ENCODE measurements at regions of chr1 and their contacts with region 1.

Region 1: DNA sequence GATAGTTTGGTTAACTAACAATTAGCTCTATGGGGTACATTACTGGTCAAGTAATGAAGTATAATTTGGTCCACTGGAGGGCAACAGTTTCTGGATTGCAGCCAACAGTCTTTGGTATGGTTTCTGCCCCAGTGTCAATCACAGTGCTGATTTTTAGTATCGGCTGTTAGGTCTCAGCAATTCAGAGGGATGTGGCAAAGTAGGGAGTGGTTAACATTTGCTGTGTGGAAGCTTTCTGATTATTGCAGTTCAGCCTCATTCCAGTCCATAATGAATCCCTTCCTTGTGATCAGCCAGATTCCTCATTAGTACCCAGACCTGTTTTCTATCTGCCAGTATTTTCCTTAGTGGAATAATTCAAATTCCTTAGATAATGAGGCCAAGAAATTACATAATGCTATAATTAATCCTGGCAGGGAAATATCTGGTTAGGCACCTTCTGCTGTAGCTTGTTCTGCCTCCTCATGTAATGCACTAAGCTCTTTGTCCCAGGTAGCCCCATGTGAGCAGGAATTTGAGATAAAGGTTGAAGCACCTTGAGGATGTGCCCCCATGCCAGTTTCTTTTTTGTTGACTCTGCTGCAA is 14.0 kb downstream of the F3 start:
- DNase-seq: no peak
- ATAC-seq: peak; percentile 35

Region 2: GRCh38 chr1:94095112-94095637 is 432.4 kb before region 1 on chr1:
- intact Hi-C with region 1: no loop called
- DNase-seq: peak; percentile 93
- ATAC-seq: peak; percentile 86

Region 3: GRCh38 chr1:94169126-94169525 is 358.4 kb before region 1 on chr1:
- intact Hi-C with region 1: no loop called
- DNase-seq: no peak
- ATAC-seq: no peak

Region 4: DNA sequence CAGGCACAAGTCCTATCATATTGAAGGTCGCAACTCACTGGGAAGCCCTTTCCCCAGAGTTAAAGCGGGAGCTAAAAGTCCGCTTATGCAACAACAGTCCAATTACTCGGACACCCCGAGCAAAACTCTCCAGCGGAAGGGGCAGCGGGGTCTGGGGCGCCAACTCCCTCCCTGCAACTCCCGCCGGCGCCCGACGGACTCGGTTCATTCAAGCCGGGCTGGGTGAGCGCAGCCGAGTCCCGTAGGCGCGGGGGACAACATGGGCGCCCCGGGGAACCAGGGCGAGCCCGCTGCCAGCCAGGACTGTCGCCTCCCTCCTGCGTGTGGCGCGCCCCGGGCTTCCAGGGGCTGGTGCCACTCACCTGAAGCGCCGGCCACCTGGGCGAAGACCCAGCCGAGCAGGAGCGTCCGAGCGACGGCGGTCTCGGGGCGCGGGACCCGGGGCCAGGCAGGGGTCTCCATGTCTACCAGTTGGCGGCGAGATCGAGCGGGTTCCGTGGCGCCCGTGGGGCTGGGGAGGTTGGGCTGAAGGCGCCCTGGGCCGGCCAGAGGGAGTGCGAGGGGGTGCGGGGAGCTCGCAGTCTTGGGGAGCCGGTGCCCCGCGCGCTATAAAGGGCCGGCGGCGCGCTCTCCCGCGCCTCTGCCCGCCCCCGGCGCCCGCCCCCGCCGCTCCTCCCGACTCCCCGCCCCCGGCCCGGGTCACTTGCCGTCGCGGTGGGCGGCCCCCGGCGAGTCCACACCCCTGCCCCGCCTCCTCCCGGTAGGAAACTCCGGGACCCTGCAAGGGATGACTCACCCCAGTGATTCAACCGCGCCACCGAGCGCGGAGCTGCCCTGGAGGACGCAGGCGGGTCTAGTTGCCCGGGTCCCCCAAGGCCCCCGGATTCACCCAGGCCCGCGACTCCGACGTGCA is 13.9 kb after region 1 on chr1 and contains the start of gene F3:
- intact Hi-C with region 1: no loop called
- DNase-seq: peak; percentile 92
- ATAC-seq: peak; percentile 93
- total RNA-seq, gene F3: 27.9 TPM

Region 5: DNA sequence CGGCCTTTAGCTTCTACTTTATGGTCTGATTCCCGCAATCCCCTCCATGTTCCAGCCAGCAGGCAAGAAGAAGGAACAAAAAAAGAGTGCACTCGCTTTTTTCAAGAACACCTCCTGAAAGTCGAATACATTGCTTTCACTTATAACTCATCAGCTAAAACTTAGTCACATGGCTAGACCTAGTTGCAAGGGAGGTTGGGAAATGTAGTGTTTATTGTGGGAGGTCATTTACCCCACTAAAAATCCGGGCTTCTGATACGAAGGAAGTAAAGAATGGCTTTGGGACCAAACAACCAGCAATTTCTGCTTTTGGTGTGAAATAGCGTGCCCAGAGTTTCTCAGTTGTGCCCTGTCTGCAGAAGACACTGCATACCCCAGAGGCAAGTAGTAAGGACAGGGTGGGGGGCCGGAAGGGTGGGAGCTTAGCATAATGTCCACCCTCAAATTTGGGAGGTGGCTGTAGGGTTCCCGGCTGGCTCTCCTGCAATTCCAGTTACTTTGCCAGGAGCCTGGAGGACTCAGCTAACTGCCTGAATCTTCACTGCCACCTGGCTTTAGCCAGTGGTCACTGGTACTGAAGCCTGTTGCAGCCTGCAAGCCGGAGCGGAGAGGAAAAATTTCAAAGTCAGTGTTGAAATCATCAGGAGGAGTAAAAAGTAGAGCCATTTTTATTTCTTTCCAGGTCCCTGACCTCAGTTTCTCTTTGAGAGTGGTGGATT is 71.7 kb after region 1 on chr1:
- intact Hi-C with region 1: loop called (anchors 2 kb)
- DNase-seq: no peak
- ATAC-seq: peak; percentile 83

Region 6: DNA sequence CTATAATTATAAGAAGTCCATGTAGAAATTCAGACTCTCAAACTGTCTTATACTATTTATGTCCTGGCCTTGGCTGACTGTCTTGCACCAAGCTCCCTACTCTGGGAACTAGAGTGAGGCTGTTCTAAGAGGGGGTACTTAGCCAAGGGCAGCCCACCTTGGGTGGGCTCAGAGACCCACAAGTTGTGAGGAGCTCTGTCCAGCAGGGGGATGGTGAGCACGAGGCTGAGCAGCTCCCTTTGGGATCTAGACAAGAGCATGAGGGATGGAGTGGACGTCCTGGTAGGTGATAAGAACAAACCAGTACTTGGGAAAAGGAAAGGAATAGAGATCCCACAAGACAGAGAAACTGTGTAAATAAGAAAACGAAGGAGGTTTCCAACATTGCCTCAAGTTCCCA is 165.5 kb after region 1 on chr1:
- intact Hi-C with region 1: no loop called
- DNase-seq: no peak
- ATAC-seq: no peak

Measured in Right ventricle myocardium inferior (tissue), 1 donor.